Naive thymus-derived CD8-positive, alpha-beta T cell (primary cell): ENCODE measurements at regions of chr6 and their contacts with region 1.

Region 1: DNA sequence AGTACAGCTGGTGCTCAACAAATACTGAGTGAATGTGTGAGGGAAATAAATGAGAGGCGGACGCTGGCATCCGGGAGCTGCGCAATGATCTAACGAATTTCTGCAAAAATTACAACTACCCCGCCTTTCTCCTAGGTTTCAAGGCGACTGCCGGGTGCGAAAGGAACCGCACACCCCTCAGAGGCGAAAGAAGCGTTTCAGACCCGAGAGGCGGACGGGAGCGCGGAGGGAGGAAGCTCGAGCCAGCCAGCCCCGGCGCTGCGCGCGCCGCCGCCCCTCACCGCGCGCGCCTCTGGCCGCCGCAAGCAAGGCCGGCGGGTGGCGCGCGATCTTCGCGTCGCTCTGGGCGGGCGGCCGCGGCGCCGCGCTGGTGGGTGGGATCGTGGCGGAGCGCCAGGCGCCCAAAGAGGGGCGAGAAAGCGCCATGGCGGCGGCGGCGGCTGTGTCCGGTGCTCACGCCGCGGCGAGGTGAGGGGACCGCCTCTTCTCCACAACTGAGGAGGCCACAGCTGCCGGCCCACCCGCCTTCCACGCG is at the start of gene BLTP3A:
- DNase-seq: peak; percentile 63 to 84 (median 74)
- ATAC-seq: peak; percentile 93
- H3K4me3 Mint-ChIP-seq: peak within 1 kb of the TSS; percentile 91 to 99 (median 98)
- H3K27ac Mint-ChIP-seq: peak within 1 kb of the TSS; percentile 93 to 99 (median 97)
- H3K4me1 Mint-ChIP-seq: peaks cover 19 to 30% (median 28%) of the 10 kb centered on the region in 4 donors
- H3K27me3 Mint-ChIP-seq: no peaks in the 10 kb centered on the region
- polyA plus RNA-seq, gene BLTP3A: 1.4 to 1.5 (median 1.4) TPM

Region 2: DNA sequence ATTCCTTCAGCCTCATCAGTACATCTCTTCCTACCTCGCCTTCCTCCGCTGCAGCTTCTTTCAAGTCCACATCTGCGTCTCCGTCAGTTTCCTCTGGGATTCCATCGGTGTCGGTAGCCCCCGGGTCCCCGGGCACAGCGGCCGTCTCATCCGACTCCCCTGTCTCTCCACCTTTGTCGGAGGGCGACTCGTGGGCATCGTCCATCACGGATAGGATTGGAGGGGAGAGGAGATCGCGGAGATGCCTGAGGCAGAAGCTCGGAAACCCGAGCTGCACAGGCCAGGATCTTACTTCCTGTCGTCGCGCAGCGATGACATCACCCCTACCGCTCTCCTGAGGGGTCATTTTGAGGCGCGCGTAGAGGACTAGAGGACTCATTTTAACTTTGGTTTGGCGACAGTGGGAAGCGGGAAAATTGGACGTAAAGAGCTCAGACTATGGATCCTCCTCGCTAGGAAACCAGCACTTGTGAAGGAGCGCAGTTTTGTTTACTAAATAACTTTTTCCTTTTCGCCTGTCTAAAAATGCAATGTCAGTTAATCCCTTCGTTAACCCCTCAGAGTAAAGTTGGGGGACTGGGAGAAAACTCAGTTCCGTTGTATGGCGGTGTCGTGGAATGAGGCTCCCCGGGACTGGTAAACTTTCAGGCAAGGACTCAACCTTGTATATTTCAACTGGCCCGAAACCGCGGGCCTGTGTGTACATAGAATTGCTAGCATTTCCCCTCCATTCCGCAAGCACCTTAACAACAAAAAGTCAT is 96.2 kb after region 1 on chr6 and contains the start of gene TAF11:
- POLR2A ChIA-PET with region 1: interaction called, 33 read pairs
- DNase-seq: peak; percentile 77 to 95 (median 88)
- ATAC-seq: peak; percentile 68 to 69
- H3K4me3 Mint-ChIP-seq: peak within 1 kb of the TSS; percentile 99 to 100 (median 100)
- H3K27ac Mint-ChIP-seq: peak within 1 kb of the TSS; percentile 97 to 100 (median 100)
- H3K4me1 Mint-ChIP-seq: peaks cover 28 to 65% (median 58%) of the 10 kb centered on the region in 4 donors
- H3K27me3 Mint-ChIP-seq: no peaks in the 10 kb centered on the region
- polyA plus RNA-seq, gene TAF11: 11.2 to 18.2 (median 13.7) TPM